HEK293T (cell line): ENCODE measurements at regions of chr13 and their contacts with region 1.

Region 1: DNA sequence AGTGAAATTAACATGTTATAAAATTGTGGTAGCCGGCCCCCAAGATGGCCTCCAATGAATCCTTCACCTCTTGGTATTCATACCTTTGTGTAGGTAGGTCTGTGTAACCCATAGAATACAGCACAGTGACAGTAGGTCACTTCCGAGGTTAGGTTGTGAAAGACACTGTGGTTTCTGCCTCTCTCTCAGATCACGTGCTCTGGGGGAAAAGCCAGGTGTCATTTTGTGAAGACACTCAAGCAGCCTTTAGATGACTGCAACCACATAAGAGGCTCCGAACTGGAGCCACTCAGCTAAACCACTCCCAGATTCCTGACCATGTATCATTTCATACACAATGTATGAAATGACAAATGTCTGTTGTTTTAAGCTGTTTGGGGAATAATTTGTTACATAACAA is 9.8 kb upstream of the USPL1 start:
- DNase-seq: no peak

Region 2: DNA sequence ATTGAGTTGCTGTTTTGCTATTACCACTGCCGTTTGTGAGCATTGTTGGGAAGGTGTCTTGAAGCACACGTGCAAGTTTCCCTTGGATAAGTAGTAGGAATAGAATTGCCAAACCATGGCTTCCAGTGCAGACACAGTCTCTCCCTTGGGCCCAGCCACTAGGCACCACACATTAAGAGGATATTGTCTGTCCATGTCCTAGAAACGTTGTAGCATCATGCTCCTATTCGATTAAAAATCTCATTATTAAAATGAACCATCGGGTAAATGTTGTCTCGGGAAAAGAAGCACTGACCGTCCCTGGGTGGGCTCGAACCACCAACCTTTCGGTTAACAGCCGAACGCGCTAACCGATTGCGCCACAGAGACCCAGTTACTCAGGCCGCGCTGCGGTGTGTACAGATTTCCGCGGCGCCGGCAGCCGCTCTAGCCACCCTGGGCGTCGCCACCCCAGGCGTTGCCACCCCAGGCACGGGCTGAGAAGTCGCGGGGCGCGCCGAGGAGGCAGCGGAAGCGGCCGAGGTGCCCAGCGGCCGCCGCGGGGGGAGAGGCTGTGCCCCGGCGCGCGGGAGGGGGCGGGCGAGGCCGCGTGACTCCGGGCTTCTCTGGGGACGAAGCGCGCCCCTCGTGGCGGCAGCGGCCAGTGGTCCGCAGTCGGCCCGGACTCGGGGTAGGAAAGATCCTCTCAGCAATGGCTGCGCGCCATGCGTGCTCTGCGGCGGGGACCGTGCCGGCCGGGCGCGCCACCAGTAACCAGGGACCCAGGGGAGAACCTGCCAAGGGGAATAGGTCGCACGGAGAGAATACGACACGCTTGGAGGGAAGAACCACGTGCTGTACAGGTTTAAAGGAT is 66.0 kb after region 1 on chr13:
- CTCF ChIA-PET with region 1: interaction called, 10 read pairs
- POLR2A ChIA-PET with region 1: no interaction called
- DNase-seq: peak; percentile 88